PC-3 (cell line): ENCODE measurements at regions of chr4 and their contacts with region 1.

Region 1: DNA sequence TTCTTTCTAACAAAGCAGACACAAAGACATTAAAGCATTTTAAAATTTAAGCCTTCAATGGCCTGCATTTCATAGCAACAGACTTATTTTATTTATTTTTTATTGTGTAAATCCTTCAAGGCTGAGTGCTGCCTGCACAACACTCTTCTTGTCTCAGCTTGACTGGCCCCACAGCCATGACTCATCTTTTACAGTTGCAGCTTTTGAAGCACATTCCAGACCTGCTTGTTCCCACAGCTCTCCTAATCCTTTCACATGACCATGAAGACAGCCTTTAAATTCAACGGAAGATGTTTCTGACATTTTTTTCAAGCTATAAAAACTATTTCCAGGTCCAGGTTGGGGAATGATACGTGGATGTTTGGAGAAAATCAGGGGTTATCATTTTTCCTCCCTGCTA is 276.9 kb upstream of the TACR3 start:
- DNase-seq: peak; percentile 72
- ATAC-seq: peak; percentile 99
- H3K4me3 ChIP-seq: no peak overlapping the region
- H3K27ac ChIP-seq: peak overlapping the region; percentile 14; the same call in 1 of the 2 replicates
- H3K4me1 ChIP-seq: peaks cover 12% of the 10 kb centered on the region; the same call in 1 of the 2 replicates
- H3K27me3 ChIP-seq: no peaks in the 10 kb centered on the region
- CTCF ChIP-seq: no peak

Region 2: DNA sequence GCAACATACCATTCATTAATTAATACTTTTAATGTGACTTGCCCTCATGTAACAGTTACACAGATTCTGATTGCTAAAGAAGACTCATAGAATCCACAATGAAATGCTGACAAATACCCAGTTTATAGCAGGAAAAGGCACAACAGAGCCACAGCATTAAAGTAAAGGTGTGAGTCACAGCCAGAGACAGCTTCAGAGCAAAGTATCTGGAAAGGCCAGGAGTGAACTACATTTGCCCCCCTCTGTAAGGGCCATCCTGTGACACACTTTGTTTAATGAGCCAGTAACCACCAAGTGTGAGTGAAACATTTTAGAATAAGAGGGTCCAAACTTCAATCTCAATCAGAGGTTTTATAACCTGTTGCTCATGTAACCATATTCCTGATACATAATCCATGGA is 143.0 kb before region 1 on chr4:
- CTCF ChIA-PET with region 1: no interaction called
- POLR2A ChIA-PET with region 1: no interaction called
- intact Hi-C with region 1: no loop called
- DNase-seq: peak; percentile 28
- ATAC-seq: peak; percentile 81
- H3K4me3 ChIP-seq: no peak overlapping the region
- H3K27ac ChIP-seq: no peak overlapping the region
- H3K4me1 ChIP-seq: no peaks in the 10 kb centered on the region
- H3K27me3 ChIP-seq: no peaks in the 10 kb centered on the region
- CTCF ChIP-seq: no peak

Region 3: DNA sequence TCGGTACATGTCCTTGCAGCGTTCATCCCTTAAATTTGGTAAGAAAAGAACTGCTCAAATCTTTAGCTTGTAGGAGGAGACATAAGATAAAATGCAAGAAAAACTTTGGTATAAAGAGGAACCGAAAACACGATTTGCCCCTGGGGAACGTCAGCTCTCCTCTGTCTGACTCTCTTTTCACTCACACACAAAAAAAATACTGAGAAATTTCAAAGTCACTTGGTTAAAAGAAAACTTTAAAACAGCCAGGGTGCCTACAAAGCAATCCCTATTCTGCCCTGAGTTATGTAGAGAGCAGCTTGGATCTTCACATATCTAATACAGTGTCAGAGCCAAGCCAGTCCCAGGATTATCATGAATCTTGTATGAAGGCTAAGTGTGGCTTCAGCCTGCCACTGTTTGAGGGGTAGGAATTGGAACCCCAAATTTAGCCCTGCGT is 746.6 kb after region 1 on chr4:
- CTCF ChIA-PET with region 1: no interaction called
- POLR2A ChIA-PET with region 1: interaction called, 16 read pairs
- intact Hi-C with region 1: no loop called
- DNase-seq: no peak
- ATAC-seq: no peak
- H3K4me3 ChIP-seq: no peak overlapping the region
- H3K27ac ChIP-seq: no peak overlapping the region
- H3K4me1 ChIP-seq: peaks cover 16% of the 10 kb centered on the region
- H3K27me3 ChIP-seq: no peaks in the 10 kb centered on the region
- CTCF ChIP-seq: no peak